ENCODE measurements at regions of chr5 and their contacts with region 1.

Region 1: DNA sequence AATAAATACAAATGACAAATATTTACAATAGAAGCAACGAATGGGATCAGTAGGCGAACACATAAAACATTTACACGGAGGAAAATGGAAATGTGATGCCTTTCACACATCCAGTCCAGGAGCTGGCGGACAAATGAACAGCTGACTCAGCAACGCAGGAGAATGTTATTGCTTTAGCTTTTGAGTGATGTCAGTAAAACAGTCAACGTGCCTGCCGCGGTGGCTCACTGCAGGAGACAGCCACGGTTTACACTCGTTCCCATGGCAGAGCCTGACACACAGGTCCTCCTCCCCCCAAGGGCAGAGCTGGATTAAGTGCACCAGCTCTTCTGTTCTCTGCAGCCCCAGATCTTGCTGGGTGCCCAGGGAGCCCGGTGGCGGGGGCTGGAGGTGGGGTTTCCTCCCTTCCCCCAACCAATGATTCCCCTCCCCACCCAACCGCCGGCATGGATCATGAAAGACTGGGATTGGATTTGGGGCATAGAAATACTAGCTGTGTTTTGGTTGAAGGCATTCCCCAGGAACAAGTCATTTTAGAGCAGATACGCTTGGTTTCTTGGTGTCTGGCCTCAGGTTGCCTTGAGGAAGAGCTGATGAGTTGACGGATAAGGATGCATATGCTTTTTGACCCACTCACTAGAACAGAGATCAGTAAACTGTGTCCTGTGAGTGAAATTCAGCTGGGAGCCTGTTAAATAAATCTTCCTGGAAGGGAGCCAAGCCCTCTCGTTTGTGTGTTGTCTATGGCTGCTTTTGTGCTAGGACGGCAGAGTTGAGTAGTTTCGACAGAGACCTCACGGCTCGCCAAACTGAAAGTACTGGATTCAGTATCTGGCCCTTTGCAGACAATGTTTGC is 12.5 kb downstream of the STC2 start:
- DNase-seq: no peak
- ATAC-seq: no peak
- H3K4me3 ChIP-seq: no peak overlapping the region
- H3K27ac ChIP-seq: no peak overlapping the region
- H3K4me1 ChIP-seq: no peaks in the 10 kb centered on the region
- CTCF ChIP-seq: no peak
- EP300 ChIP-seq: no peak
- POLR2A ChIP-seq: no peak
- RAD21 ChIP-seq: no peak

Region 2: DNA sequence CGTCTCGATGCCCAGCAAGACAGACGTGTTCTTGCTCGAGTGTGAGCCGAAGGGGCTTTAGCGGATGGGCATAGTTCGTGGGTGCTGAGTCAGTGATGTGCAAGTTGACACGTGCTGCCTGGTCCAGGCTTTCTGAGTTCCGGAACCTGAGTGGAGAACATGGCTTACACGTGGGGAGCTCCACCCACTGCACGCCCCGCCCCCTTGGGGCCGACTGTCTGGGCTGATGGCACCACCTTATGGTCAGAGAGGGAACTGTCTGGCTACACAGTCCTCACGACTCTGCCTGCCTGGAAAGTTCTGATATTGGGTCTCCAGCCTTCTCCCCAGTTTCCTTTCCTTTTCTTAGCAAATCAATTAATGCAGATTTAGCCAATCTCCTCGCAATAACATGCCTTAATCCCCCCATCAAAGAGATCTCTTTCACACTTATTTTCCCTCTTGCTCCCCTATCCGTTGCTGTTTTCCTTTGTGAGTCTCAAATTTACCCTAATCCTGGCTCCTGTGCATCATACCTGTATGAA is 16.3 kb after region 1 on chr5:
- CTCF ChIA-PET with region 1: interaction called, 22 read pairs
- POLR2A ChIA-PET with region 1: interaction called, 13 read pairs
- DNase-seq: peak; percentile 79 to 87
- ATAC-seq: peak in 1 of 2 experiments; percentile 69; a peak in 3 of 6 replicates
- H3K4me3 ChIP-seq: no peak overlapping the region
- H3K27ac ChIP-seq: peak overlapping the region; percentile 88 to 97; a peak in 5 of 6 replicates
- H3K4me1 ChIP-seq: peaks cover 23% of the 10 kb centered on the region
- CTCF ChIP-seq: peak; percentile 73
- EP300 ChIP-seq: no peak
- POLR2A ChIP-seq: no peak
- RAD21 ChIP-seq: peak; percentile 84 to 93

Region 3: GRCh38 chr5:173420108-173420507 is 104.4 kb after region 1 on chr5:
- CTCF ChIA-PET with region 1: no interaction called
- POLR2A ChIA-PET with region 1: no interaction called
- DNase-seq: no peak
- ATAC-seq: no peak
- H3K4me3 ChIP-seq: no peak overlapping the region
- H3K27ac ChIP-seq: no peak overlapping the region
- H3K4me1 ChIP-seq: no peaks in the 10 kb centered on the region
- CTCF ChIP-seq: no peak
- EP300 ChIP-seq: no peak
- POLR2A ChIP-seq: no peak
- RAD21 ChIP-seq: no peak